ENCODE measurements at regions of chr14 and their contacts with region 1.

Region 1: DNA sequence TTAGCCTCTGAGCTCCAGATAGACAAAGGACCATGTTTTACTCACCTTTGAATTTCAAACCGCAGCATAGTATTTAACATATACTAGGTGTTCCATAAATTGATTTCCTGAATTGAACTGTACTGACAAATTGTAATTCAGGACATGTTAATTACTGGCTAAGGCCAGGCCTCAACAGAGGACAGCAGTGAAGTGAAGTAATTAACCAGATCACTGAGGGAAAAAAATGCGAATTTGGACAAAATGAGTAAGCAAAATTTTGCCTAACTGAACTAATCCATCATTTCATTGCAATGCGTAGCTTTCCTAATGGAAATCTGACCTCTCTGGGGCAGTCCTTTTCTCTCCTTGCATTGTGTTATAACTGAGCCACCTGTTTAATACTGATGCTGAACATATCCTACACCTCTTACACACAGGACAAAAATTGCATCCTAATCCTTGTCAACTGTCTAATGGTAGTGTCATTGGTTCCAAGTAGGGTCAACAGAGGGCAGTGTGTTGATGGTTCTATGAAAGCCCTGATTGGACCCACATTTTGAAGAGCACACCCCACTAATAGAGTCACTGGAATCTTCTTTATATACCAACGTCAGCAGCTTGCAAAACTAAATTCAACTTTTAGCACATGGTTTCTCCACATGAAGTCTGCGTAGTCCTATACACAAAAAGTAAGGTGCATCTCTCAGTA is 148.4 kb downstream of the SLC25A21 start:
- DNase-seq: peak; percentile 35
- ATAC-seq: peak; percentile 85
- H3K4me3 ChIP-seq: no peak overlapping the region
- H3K27ac ChIP-seq: no peak overlapping the region
- H3K4me1 ChIP-seq: no peaks in the 10 kb centered on the region
- H3K27me3 ChIP-seq: no peaks in the 10 kb centered on the region
- CTCF ChIP-seq: peak; percentile 45
- EP300 ChIP-seq: no peak
- POLR2A ChIP-seq: no peak
- RAD21 ChIP-seq: no peak

Region 2: GRCh38 chr14:37150414-37150813 is 126.4 kb after region 1 on chr14:
- CTCF ChIA-PET with region 1: interaction called, 11 read pairs
- POLR2A ChIA-PET with region 1: no interaction called
- in situ Hi-C with region 1: no loop called
- intact Hi-C with region 1: loop called (anchors 1 kb)
- DNase-seq: peak; percentile 63
- ATAC-seq: peak; percentile 75
- H3K4me3 ChIP-seq: no peak overlapping the region
- H3K27ac ChIP-seq: no peak overlapping the region
- H3K4me1 ChIP-seq: no peaks in the 10 kb centered on the region
- H3K27me3 ChIP-seq: no peaks in the 10 kb centered on the region
- CTCF ChIP-seq: peak; percentile 78
- EP300 ChIP-seq: no peak
- POLR2A ChIP-seq: no peak
- RAD21 ChIP-seq: no peak